Ovary (tissue), 10 donors: ENCODE measurements at regions of chr9 and their contacts with region 1.

Region 1: GRCh38 chr9:35657546-35658136 is at the start of gene RMRP:
- DNase-seq: peak; percentile 96 to 97 (median 97)
- H3K4me3 ChIP-seq: peak within 1 kb of the TSS; percentile 94
- H3K27ac ChIP-seq: peak within 1 kb of the TSS; percentile 81 to 97
- H3K4me1 ChIP-seq: no peaks in the 10 kb centered on the region
- H3K27me3 ChIP-seq: no peaks in the 10 kb centered on the region
- CTCF ChIP-seq: peak; percentile 38 to 77 (median 66)
- EP300 ChIP-seq: peak; percentile 62
- POLR2A ChIP-seq: peak; percentile 72
- total RNA-seq, gene RMRP: 3,031 to 27,726 (median 15,130) TPM

Region 2: DNA sequence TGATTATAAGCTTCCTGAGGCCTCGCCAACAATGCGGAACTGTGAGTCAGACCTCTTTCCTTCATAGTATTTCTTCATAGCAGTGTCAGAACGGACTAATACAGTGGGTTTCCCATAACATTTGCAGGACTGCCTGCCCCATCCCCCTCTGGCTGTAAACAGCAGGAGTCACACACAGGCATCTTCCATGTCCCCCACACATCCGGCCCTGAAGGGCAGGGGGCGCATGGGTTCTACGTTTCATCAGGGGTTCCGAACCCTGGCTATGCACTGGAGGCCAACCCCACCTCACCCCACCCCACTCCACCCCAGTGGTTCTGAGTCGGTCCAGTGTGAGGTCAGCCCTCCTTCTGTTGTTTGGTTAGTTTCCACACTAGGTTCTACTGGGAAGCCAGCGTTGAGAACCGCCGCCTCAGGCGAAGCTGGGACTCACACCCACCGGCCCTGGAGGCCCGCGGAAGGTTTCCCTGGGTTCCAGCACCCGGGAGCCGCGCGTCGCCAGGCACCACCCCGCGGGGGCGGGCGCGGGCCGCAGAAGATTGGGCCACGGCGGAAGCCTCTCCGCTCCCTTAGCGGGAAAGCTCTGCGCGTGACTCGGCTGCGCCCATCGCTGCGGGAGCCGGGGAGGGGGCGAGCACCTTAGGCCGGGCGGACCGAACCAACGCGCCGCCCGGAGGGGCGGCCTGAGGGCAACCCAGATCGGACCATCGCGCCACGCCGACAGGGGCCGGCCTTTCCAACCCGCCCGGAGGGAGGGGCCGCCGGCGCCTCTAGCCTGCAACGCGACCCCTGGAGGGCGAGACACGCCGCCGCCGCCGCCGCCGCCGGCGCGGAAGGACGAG is 168.1 kb before region 1 on chr9 and contains the start of gene RUSC2:
- intact Hi-C with region 1: loop called in 1 of 4 experiments (anchors 10 kb)
- DNase-seq: peak; percentile 86 to 92 (median 90)
- H3K4me3 ChIP-seq: peak within 1 kb of the TSS; percentile 62
- H3K27ac ChIP-seq: peak within 1 kb of the TSS; percentile 87 to 90
- H3K4me1 ChIP-seq: peaks cover 8% of the 10 kb centered on the region
- H3K27me3 ChIP-seq: no peaks in the 10 kb centered on the region
- CTCF ChIP-seq: peak in 2 of 3 donors; percentile 59 to 62
- EP300 ChIP-seq: no peak
- POLR2A ChIP-seq: peak; percentile 71
- total RNA-seq, gene RUSC2: 13.9 to 41.1 (median 31.7) TPM

Region 3: DNA sequence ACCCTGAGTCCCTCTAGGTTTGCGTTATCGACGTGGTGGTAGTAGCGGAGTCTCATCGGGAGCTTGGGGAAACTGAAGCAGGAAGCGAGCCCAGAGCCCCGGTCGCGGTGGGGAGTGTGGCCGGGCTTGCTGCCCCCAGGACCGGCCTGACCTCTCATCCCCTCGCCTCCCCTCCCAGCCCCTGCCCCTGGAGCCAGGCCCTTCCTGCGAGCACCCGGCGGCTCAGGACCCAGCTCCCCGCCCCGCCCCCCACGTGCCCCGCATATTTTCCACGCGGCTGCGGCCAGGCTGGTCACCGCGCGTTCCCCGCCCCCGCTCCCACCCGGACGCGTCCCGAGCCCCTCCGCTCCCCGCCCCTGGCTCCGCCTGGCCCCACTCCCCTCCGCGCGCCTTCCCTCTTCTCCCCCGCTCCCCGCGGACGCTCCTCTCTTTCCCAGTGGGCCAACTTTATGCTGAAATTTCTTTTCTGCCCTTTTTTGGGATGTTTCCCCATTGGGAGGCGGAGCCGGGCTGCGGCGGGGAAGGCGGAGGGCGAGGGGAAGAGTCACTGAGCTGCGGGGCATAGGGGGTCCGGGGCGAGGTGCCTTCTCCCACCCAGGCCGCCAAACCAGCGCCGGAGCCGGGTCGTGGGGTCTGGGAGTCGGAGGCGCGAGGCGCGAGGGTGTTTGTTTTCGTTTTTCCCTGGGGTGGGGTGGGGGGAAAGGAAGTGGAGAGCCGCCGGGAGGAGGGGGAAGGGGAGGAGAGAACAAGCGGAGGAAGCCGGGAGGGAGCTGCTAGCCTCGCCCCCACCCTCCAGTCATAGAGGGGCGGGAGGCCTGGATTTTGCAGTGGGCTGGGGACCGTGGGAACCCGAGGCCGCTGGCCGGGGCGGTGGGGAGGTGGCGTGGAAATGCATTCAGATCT is 33.0 kb after region 1 on chr9:
- intact Hi-C with region 1: loop called in 2 of 4 experiments (anchors 2 to 5 kb)
- DNase-seq: peak; percentile 82 to 91 (median 85)
- H3K4me3 ChIP-seq: peak overlapping the region; percentile 66
- H3K27ac ChIP-seq: peak overlapping the region; percentile 46 to 93
- H3K4me1 ChIP-seq: peaks cover 13% of the 10 kb centered on the region
- H3K27me3 ChIP-seq: no peaks in the 10 kb centered on the region
- CTCF ChIP-seq: no peak
- EP300 ChIP-seq: no peak
- POLR2A ChIP-seq: peak; percentile 49

Region 4: GRCh38 chr9:37215830-37216229 is 1558.2 kb after region 1 on chr9:
- intact Hi-C with region 1: no loop called
- DNase-seq: no peak
- H3K4me3 ChIP-seq: no peak overlapping the region
- H3K27ac ChIP-seq: no peak overlapping the region
- H3K4me1 ChIP-seq: no peaks in the 10 kb centered on the region
- H3K27me3 ChIP-seq: no peaks in the 10 kb centered on the region
- CTCF ChIP-seq: no peak
- EP300 ChIP-seq: no peak
- POLR2A ChIP-seq: no peak